ENCODE measurements at regions of chr17 and their contacts with region 1.

Region 1: DNA sequence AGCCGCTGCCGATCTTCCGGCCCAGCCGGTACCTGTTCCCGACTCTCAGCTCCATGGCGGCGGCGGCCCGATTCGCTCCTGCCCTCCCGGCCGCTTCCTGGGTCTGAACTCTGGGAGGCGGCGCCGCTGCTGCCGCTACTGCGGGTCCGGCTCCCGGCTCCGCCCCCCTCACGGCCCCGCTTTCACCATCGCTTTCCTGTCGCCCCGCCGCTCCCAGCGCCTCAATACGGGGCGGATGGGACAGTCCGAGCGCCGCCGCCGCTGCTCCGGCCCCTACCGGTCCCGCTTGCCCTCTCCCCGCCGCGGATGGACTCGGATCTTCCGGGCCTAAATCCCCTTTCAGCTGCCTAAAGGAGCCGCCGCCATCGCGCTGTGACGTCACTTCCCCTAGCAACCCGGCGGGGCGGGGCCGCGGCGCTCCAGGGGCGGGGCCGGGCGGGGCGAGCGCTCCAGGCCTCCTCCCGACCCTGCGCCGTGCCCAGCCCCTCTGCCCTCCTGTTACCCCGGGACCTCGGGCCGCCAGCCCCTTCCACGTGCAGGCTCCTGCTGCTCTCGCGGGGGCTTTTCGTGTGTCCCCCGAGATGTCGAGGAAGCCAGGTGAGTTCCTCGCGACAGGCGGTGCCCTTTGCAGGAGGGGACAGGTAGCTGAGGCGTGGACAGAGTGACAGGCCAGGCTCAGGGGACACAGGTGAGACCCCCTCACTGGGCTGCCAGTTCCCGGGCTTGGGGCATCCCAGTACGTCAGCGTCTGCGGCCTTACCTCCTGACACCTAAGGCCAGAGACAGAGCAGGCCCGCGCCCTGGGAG is at the start of gene CSNK1D:
- DNase-seq: peak; percentile 76 to 85
- ATAC-seq: peak; percentile 84 to 87
- H3K4me3 ChIP-seq: peak within 1 kb of the TSS; percentile 90 to 99 (median 98)
- H3K27ac ChIP-seq: peak within 1 kb of the TSS; percentile 99 to 100 (median 100)
- H3K4me1 ChIP-seq: peaks cover 44 to 48% of the 10 kb centered on the region in 2 donors
- H3K27me3 ChIP-seq: no peaks in the 10 kb centered on the region
- CTCF ChIP-seq: no peak
- POLR2A ChIP-seq: peak; percentile 76 to 84
- total RNA-seq, gene CSNK1D: 34.0 to 55.2 (median 47.3) TPM

Region 2: DNA sequence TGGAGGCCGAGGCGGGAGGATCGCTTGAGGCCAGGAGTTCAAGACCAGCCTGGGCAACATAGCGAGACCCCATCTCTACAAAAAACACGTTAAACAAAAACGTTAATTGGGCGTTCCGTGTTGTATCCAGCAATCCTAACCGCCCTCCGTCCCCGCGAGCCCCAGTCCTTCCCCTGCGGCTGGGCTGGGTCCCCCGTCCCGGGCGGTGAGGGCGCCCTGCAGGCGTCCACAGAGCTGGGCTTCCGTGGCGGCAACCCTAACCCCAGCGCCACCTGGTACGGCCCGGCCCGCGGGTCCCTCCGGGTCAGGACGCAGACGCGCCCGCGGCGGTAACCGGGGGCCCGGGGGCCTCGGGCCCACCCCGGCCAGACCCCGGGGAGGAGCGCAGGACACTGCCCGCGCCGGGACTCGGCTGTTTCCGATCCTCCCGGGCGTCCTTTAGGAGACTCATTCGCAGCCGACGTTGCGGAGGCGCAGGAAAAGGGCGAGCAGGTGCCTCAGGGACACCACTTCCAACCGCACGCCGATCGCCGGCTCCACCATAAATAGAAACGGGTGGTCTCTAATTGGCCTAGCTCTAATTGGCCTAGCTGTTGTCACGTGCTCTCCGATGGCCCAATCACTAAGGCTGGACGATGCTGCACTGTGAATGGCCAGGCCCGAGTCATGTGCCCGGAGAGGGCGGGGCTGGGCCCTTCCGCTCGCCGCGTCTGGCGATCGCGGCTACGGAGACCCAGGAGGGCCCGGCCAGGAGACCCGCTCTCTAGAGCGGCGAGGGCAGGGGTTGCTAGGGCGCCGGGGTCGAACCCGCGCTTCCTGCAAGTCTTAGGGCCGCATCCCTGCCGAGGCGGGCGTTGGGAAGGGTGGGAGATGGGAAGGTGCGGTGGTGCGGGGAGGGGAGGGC is 19.0 kb after region 1 on chr17:
- in situ Hi-C with region 1: no loop called
- intact Hi-C with region 1: loop called (anchors 1 kb)
- DNase-seq: peak; percentile 98 to 99
- ATAC-seq: peak; percentile 81 to 87
- H3K4me3 ChIP-seq: peak overlapping the region; percentile 78 to 97 (median 91)
- H3K27ac ChIP-seq: peak overlapping the region; percentile 98 to 99 (median 98)
- H3K4me1 ChIP-seq: peaks cover 44 to 48% of the 10 kb centered on the region in 2 donors
- H3K27me3 ChIP-seq: no peaks in the 10 kb centered on the region
- CTCF ChIP-seq: peak in 1 of 5 experiments; percentile 14
- POLR2A ChIP-seq: peak; percentile 99 to 100

Measured in gastrocnemius medialis (tissue), 4 donors.